MCF 10A (cell line): ENCODE measurements at regions of chr11 and their contacts with region 1.

Region 1: DNA sequence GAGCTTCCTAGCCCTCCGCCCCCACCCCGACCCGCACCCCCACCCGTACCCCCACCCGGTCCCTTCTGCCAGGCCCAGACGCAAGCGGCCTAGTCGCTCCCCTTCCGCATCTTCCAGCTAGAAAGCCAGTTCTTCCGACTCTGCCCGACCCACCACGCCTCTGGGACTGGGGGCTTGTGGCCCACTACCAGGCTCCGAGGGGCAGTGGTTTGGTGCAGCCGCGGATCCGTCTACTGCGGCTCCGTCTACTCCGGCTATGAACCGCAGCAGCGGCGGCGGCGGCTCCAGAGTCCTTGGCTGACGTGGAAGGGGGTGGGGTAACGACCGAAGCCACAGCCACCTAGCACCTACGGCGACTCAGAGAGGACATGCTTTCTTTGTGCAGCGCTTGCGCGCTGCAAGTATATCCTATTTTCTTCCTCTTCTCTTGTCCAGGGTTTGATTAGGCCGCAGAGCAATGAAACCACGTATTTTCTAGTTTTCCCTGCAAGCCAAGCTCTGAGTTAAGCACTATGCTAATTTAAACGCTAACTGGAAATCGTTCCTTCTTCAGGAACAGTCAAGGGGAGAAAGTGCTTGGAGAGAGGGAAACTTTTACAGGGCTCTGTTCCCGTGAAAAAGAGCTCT is at the start of gene COPB1:
- DNase-seq: peak; percentile 93
- H3K4me3 Mint-ChIP-seq: peak within 1 kb of the TSS; percentile 76
- H3K27ac Mint-ChIP-seq: peak within 1 kb of the TSS; percentile 95
- H3K4me1 Mint-ChIP-seq: peaks cover 28% of the 10 kb centered on the region
- H3K27me3 Mint-ChIP-seq: no peaks in the 10 kb centered on the region
- CTCF ChIP-seq: no peak
- total RNA-seq, gene COPB1: 159 and 180 TPM in 2 replicates

Region 2: GRCh38 chr11:14308114-14308896 is 191.4 kb before region 1 on chr11:
- CTCF ChIA-PET with region 1: no interaction called
- POLR2A ChIA-PET with region 1: no interaction called
- intact Hi-C with region 1: no loop called
- DNase-seq: peak; percentile 65
- H3K4me3 Mint-ChIP-seq: no peak overlapping the region
- H3K27ac Mint-ChIP-seq: no peak overlapping the region
- H3K4me1 Mint-ChIP-seq: peaks cover 2% of the 10 kb centered on the region
- H3K27me3 Mint-ChIP-seq: no peaks in the 10 kb centered on the region
- CTCF ChIP-seq: peak; percentile 42

Region 3: DNA sequence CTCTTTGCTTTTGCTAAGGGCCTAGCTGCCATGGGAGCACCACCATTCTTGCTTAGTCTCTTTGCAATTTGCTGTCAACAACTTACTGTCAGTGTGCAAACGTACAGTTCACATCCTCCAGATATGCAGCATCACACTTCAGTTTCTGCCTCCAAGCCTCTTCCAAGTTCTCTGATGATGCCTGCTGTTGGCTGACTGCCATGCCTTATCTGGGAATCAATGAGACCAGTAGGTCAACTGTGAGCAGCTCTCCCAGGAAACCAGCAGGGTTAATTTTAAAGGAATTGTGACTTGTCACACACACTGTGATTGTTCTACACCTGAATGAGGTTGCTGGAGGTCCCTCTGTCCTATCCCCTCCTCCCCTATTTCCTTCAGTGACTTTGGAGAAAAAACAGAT is 56.0 kb before region 1 on chr11:
- CTCF ChIA-PET with region 1: no interaction called
- POLR2A ChIA-PET with region 1: no interaction called
- intact Hi-C with region 1: no loop called
- DNase-seq: peak; percentile 33
- H3K4me3 Mint-ChIP-seq: no peak overlapping the region
- H3K27ac Mint-ChIP-seq: no peak overlapping the region
- H3K4me1 Mint-ChIP-seq: peaks cover 8% of the 10 kb centered on the region
- H3K27me3 Mint-ChIP-seq: no peaks in the 10 kb centered on the region
- CTCF ChIP-seq: no peak

Region 4: GRCh38 chr11:14480716-14481115 is 19.0 kb before region 1 on chr11:
- CTCF ChIA-PET with region 1: interaction called, 3 read pairs
- POLR2A ChIA-PET with region 1: interaction called, 10 read pairs
- intact Hi-C with region 1: no loop called
- DNase-seq: no peak
- H3K4me3 Mint-ChIP-seq: no peak overlapping the region
- H3K27ac Mint-ChIP-seq: peak overlapping the region; percentile 57
- H3K4me1 Mint-ChIP-seq: peaks cover 6% of the 10 kb centered on the region
- H3K27me3 Mint-ChIP-seq: no peaks in the 10 kb centered on the region
- CTCF ChIP-seq: no peak

Region 5: DNA sequence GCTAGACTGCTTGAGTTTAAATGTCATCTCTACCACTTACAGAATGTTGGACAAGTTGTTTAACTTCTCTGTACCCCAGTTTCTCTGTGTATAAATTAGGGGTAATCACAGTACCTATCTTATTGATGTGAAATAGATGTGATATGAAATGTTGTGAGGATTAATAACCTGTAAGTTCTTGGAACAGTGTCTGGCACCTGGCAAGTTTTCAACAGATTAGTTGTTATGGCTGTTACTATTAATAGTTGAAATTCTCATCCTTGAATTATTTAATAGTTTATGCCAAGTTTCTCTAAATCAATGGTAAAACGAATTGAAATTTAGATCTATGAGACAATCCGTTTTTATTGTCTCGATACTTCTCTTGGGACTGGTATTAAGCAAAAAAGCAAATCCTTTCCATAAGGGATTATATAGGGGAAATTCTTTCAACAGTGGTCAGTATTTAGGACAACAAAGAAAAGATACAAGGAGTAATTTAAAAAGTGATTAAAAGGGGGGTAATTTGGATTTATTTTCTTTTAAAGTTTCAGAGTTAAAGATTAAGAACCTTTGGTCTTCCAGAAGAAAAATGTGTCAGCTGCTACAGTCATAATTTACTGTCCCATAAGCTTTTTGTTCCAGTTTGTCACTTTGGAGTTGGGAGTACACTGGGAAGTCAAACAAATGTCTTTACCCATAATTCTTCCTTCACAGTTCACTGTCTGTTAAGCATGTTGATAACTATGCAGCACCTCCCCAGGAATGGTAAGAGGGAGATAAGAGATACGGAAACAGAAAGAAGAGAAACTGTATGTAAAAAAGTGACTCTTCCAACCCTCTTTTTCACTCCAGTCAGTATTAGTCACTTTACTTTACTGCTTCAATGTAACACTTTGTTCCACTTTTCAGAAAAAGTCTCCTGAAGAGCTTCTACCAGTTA is 157.1 kb after region 1 on chr11:
- CTCF ChIA-PET with region 1: no interaction called
- POLR2A ChIA-PET with region 1: no interaction called
- intact Hi-C with region 1: no loop called
- DNase-seq: no peak
- H3K4me3 Mint-ChIP-seq: no peak overlapping the region
- H3K27ac Mint-ChIP-seq: no peak overlapping the region
- H3K4me1 Mint-ChIP-seq: no peaks in the 10 kb centered on the region
- H3K27me3 Mint-ChIP-seq: peaks cover 56% of the 10 kb centered on the region
- CTCF ChIP-seq: no peak

Region 6: DNA sequence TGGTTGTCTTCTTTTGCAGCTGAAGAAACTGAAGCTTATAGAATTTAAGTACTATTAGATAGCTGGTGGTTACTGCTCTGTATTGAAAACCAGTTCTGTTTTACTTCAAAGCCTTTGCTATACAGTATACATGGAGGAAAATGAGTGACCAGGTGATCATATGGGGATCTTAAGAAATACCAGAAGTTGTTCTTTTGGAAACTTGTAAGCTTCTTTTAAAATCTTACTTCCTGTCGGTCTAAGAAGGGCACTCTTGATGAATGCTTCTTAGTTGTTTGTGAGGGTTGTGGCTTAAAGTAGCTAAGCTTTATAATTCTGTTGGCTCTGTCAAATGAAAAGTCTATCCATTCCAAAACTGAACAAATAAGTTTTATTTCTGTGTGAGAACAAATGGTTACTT is 199.1 kb after region 1 on chr11:
- CTCF ChIA-PET with region 1: no interaction called
- POLR2A ChIA-PET with region 1: no interaction called
- intact Hi-C with region 1: no loop called
- DNase-seq: no peak
- H3K4me3 Mint-ChIP-seq: no peak overlapping the region
- H3K27ac Mint-ChIP-seq: no peak overlapping the region
- H3K4me1 Mint-ChIP-seq: no peaks in the 10 kb centered on the region
- H3K27me3 Mint-ChIP-seq: peaks cover 42% of the 10 kb centered on the region
- CTCF ChIP-seq: no peak